Cardiac septum (tissue), 1 donor: ENCODE measurements at regions of chr3 and their contacts with region 1.

Region 1: DNA sequence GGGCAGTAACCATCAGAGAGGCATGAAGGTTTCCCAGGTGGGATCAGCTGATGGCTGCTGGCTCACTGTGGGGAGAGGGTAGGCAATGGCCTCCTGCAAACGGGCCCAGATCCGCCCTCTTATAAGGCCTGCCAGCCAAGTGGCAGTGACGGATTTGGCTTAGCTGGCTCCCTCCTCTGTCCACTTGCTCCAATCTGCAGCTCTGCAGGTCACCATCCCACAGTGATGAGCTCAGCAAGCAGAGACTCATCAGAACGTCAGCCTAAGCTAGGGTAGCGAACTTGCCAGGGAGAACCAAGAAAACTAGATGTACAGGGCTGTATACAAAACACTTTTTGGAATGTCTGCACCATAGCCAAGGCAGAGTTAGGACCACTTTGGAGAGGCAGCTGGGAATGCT is 62.8 kb upstream of the DCLK3 start:
- DNase-seq: no peak

Region 2: DNA sequence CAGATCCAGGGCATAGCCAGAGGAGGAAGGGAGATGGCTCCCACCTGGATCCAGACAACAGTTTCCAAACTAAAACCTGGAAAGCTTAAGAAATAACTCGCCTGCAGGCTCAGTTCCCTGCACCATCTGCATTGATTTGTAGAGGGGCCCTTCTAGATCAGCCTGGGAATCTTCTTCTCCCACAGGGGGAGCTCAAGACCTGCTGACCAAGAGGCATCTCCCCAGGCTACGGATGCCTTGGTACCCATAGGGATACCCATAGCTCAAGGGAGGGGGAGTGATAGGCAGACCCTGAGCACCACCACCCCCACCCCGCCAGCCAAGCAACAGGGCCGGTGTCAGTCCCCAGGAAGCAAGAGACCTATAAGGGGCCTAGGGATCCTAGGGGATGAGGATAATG is 34.8 kb before region 1 on chr3:
- intact Hi-C with region 1: loop called (anchors 5 kb)
- DNase-seq: no peak